HCT116 (cell line): ENCODE measurements at regions of chr17 and their contacts with region 1.

Region 1: DNA sequence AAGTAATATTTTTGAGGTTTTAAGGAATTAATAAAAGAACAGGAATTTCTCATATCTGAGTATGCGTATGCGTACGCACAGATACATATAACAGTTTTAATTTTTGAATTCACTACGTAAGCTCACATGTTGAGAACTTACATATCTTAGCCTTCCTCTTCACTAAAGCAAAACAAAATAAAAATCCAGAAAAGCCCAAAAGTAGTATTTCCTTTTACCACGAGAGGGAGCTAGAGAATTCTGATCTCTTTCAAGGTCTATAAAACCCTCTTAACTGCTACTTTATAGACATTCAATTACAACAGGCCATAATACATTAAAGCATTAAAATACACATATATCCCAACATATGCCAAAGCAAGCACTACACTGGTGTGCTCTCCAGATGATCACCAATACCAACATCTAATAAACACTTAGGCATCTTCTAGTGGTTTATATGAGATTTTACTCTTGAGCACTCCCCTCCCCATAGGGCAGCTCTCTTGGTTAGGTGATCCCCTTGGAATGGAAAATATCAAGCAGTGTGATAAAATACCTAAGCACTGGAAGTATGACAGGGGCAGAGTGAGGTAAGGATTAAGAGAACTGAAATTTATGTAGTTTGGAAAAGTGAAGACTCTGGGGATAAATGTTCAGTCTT is 94.0 kb downstream of the SKAP1 start:
- DNase-seq: peak; percentile 78
- ATAC-seq: peak; percentile 85
- H3K4me3 ChIP-seq: no peak overlapping the region
- H3K27ac ChIP-seq: no peak overlapping the region
- H3K4me1 ChIP-seq: peaks cover 0 to 9% of the 10 kb centered on the region in 2 experiments; a peak in 2 of 4 replicates
- H3K27me3 ChIP-seq: no peaks in the 10 kb centered on the region
- CTCF ChIP-seq: peak; percentile 64 to 93 (median 92)
- POLR2A ChIP-seq: no peak
- RAD21 ChIP-seq: peak; percentile 85

Region 2: GRCh38 chr17:48322060-48322459 is 13.9 kb before region 1 on chr17:
- CTCF ChIA-PET with region 1: interaction called, 55 read pairs
- POLR2A ChIA-PET with region 1: no interaction called
- RAD21 ChIA-PET with region 1: no interaction called
- intact Hi-C with region 1: no loop called
- DNase-seq: no peak
- ATAC-seq: peak; percentile 66; the same call in 1 of the 2 replicates
- H3K4me3 ChIP-seq: no peak overlapping the region
- H3K27ac ChIP-seq: no peak overlapping the region
- H3K4me1 ChIP-seq: no peaks in the 10 kb centered on the region
- H3K27me3 ChIP-seq: no peaks in the 10 kb centered on the region
- CTCF ChIP-seq: peak; percentile 23 to 53 (median 35); a peak in 3 of 6 replicates
- POLR2A ChIP-seq: no peak
- RAD21 ChIP-seq: peak; percentile 53

Region 3: GRCh38 chr17:48363161-48363560 is 27.2 kb after region 1 on chr17:
- CTCF ChIA-PET with region 1: interaction called, 18 read pairs
- POLR2A ChIA-PET with region 1: no interaction called
- RAD21 ChIA-PET with region 1: no interaction called
- intact Hi-C with region 1: no loop called
- DNase-seq: no peak
- ATAC-seq: no peak
- H3K4me3 ChIP-seq: no peak overlapping the region
- H3K27ac ChIP-seq: no peak overlapping the region
- H3K4me1 ChIP-seq: no peaks in the 10 kb centered on the region
- H3K27me3 ChIP-seq: no peaks in the 10 kb centered on the region
- CTCF ChIP-seq: no peak
- POLR2A ChIP-seq: no peak
- RAD21 ChIP-seq: no peak

Region 4: GRCh38 chr17:48544349-48545021 is 208.5 kb after region 1 on chr17:
- CTCF ChIA-PET with region 1: no interaction called
- POLR2A ChIA-PET with region 1: no interaction called
- RAD21 ChIA-PET with region 1: no interaction called
- intact Hi-C with region 1: no loop called
- DNase-seq: no peak
- ATAC-seq: no peak
- H3K4me3 ChIP-seq: peak overlapping the region in 1 of 2 experiments; percentile 59; a peak in 1 of 4 replicates
- H3K27ac ChIP-seq: no peak overlapping the region
- H3K4me1 ChIP-seq: peaks cover 0 to 10% of the 10 kb centered on the region in 2 experiments; a peak in 2 of 4 replicates
- H3K27me3 ChIP-seq: no peaks in the 10 kb centered on the region
- CTCF ChIP-seq: no peak
- POLR2A ChIP-seq: no peak
- RAD21 ChIP-seq: no peak